Posterior vena cava (tissue), 2 donors: ENCODE measurements at regions of chr1 and their contacts with region 1.

Region 1: DNA sequence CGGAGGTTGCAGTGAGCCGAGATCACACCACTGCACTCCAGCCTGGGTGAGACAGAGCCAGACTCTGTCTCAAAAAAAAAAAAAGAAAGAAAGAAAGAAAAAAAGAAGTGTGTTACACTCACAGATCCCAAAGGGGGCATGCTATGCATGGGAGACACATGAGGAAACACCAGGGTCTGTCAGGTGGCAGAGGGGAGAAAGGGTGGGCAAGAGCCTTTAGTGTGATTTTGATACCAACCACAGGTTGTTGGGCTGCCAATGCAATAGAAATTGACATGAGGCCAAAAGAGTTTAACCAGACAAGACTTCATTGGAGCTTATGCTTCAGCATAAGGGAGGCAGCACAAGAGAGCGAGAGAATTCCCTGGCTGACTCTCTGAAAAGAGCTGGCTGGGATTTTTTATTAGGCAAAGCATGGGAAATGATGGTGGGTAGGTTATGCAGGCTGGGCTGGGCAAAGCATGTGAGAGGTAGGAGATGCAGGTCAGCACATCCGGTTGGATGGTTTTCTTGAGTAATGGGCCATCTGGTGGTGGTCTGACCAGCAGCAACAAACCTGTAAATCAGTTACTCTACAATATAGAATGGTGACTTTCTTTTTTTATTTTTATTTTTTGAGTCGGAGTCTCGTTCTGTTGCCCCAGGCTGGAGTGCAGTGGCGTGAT is 11.6 kb upstream of the EXTL1 start:
- DNase-seq: no peak

Region 2: GRCh38 chr1:24244519-24245268 is 1765.2 kb before region 1 on chr1:
- intact Hi-C with region 1: loop called in 1 of 2 experiments (anchors 5 kb)
- DNase-seq: no peak